ENCODE measurements at regions of chr15 and their contacts with region 1.

Region 1: GRCh38 chr15:77966540-77967290 is 110.8 kb downstream of the TBC1D2B start:
- DNase-seq: no peak
- H3K4me3 ChIP-seq: no peak overlapping the region
- H3K27ac ChIP-seq: no peak overlapping the region
- H3K4me1 ChIP-seq: no peaks in the 10 kb centered on the region
- H3K27me3 ChIP-seq: no peaks in the 10 kb centered on the region
- CTCF ChIP-seq: peak; percentile 79 to 90 (median 89)

Region 2: DNA sequence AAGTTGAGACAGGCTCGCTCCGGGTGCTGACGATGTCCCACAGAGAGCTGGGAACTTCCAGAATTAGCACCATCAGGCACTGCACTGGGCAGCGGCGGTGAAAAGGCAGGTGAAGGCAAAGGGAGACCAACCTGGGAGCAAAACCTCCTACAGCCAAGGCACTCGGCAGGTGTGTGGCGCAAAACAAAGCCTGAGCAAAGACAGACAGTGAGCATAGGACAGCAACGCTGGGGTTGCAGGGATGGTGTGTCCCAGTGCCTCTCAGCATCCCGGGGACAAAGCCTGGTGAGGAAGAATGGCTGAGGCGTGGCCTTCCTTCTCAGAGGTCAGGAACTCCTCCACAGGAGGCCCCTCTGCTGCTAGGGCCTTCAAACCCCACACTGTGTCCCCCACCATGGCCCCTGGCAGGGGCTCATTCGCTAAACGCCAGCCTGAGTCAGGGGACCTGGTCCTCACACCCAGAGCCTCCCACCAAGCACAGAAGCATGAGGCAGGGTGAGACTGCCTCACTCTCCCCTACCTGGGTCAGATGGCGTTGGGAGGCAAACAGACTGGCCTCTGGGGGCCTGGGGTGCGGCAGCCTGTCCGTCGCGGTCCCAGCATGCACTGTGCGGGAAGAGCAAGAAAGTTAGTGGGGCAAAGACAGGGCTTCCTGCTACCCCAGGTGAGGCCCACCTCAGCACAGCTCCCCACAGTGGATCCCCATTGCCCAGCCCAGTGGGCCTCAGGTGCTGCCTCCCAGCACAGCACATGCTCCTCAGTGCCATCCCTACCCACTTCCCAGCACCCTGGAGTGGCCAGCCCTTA is 289.9 kb before region 1 on chr15:
- intact Hi-C with region 1: no loop called
- DNase-seq: no peak
- H3K4me3 ChIP-seq: no peak overlapping the region
- H3K27ac ChIP-seq: no peak overlapping the region
- H3K4me1 ChIP-seq: no peaks in the 10 kb centered on the region
- H3K27me3 ChIP-seq: no peaks in the 10 kb centered on the region
- CTCF ChIP-seq: no peak

Region 3: DNA sequence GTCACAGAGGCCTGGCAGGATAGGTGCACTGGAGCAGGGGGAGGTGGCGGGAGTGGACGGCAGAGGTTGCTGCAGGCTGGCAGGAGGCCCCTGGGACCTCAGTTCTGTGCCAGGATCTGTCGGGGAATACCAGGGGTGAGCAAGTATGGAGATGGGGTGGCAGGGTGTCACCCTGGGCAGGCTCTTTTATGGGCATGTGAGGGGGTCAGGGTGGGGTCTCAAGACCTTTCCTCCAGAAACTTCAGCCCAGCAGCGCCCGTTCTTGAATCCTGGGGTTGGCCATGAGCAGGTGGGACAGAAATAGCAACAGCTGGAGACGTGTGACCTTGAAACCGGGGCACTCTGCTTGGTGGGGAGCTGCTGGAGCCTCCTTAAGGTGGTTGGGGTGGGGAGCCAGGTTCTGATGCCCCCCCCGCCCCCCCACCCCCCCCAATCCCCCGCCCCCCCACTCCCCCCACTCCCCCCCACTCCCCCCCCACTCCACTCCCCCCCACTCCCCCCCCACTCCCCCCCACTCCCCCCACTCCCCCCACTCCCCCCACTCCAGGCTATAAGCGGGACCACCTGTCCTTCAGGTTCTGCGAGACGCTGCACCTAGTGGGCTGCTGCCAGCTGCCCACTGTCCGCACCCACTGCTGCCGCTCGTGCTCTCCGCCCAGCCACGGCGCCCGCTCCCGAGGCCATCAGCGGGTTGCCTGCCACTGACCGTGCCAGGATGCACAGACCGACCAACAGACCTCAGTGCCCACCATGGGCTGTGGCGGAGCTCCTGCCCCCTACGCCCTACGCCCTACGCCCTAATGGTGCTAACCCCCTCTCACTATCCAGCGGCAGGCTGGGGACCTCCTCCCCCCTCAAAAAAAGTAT is 25.9 kb after region 1 on chr15:
- intact Hi-C with region 1: loop called (anchors 2 kb)
- DNase-seq: no peak
- H3K4me3 ChIP-seq: no peak overlapping the region
- H3K27ac ChIP-seq: peak overlapping the region; percentile 89 to 94
- H3K4me1 ChIP-seq: peaks cover 21 to 48% of the 10 kb centered on the region in 2 donors
- H3K27me3 ChIP-seq: no peaks in the 10 kb centered on the region
- CTCF ChIP-seq: no peak